ENCODE measurements at regions of chr10 and their contacts with region 1.

Region 1: GRCh38 chr10:95279042-95279820 is 11.6 kb downstream of the PDLIM1 start:
- DNase-seq: no peak
- H3K4me3 Mint-ChIP-seq: no peak overlapping the region
- H3K27ac Mint-ChIP-seq: no peak overlapping the region
- H3K4me1 Mint-ChIP-seq: peaks cover 19% of the 10 kb centered on the region
- H3K27me3 Mint-ChIP-seq: no peaks in the 10 kb centered on the region
- CTCF ChIP-seq: no peak

Region 2: GRCh38 chr10:94591461-94592205 is 687.6 kb before region 1 on chr10:
- CTCF ChIA-PET with region 1: interaction called, 10 read pairs
- intact Hi-C with region 1: no loop called
- DNase-seq: no peak
- H3K4me3 Mint-ChIP-seq: no peak overlapping the region
- H3K27ac Mint-ChIP-seq: no peak overlapping the region
- H3K4me1 Mint-ChIP-seq: no peaks in the 10 kb centered on the region
- H3K27me3 Mint-ChIP-seq: no peaks in the 10 kb centered on the region
- CTCF ChIP-seq: no peak

Region 3: DNA sequence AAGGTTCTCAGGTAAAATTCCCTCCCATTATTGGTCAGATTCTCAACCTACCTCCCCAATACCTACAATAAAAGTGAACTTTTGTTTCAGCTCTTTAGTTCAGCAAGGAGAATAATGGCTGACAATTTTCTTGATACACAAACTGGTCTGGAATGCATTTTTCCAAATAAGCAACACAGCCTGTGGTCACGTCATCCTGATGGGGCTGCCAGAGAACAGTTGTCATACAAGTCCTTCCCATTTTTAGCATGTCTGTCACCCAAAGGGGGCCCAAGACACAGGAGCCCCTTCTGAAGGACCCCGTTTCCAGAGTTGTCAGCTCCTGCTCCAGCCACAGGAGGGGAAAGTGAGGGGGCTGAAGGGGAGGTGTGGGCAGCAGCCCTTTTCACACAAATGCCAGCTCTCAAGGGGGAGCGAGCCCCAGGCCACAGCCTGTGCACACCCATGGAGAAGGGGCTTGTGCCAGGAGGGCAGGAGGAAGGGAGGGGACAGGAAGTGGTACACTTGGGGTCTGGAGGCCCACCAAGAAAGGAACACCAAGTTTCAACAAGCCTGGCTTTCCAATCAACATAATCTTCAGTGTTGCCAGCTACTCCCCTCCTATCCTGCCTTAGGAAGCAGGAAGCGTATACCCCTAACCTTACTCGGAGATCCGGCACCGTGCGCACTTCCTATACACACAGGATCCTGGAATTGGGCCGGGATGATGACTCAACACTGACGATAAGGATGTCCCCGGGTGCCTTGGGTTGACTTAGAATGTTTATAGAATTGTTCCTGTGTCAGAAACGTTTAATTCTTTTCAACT is 55.0 kb after region 1 on chr10:
- CTCF ChIA-PET with region 1: no interaction called
- intact Hi-C with region 1: no loop called
- DNase-seq: no peak
- H3K4me3 Mint-ChIP-seq: no peak overlapping the region
- H3K27ac Mint-ChIP-seq: no peak overlapping the region
- H3K4me1 Mint-ChIP-seq: peaks cover 16% of the 10 kb centered on the region
- H3K27me3 Mint-ChIP-seq: no peaks in the 10 kb centered on the region
- CTCF ChIP-seq: no peak

Region 4: DNA sequence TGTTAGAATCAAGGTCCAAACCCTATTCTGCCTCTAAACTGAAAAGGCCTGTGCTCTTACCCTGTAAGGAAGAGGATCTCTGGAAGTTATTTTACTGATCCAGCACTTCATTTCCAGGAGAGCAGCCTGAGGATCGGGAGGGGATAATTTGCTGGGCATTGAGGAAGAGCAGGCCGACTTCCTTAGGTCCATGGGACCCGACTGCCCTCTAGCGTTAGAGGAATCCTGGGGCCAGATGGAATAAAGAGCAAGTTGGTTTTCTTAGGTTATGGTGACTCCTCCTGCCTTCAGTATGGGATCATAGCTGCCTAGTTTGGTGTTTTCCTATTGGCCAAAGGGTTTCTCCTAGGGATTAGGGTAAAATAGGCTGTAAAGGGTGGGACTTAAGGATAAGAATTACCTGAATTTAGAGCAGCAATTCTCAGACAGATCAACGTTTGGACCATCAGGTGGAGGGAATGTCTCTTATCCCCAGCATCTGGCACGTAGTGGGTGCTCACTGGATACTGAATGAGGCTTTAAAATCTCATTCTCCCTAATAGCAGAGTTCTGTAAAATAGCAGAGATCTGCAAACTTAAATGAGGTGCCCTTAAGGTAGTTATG is 322.0 kb after region 1 on chr10:
- CTCF ChIA-PET with region 1: no interaction called
- intact Hi-C with region 1: no loop called
- DNase-seq: peak; percentile 73
- H3K4me3 Mint-ChIP-seq: no peak overlapping the region
- H3K27ac Mint-ChIP-seq: no peak overlapping the region
- H3K4me1 Mint-ChIP-seq: no peaks in the 10 kb centered on the region
- H3K27me3 Mint-ChIP-seq: peaks cover 18% of the 10 kb centered on the region
- CTCF ChIP-seq: peak; percentile 73